ENCODE measurements at regions of chr5 and their contacts with region 1.

Region 1: GRCh38 chr5:81425569-81425968 is 31.6 kb upstream of the ACOT12 start:
- DNase-seq: no peak
- H3K4me3 ChIP-seq: peak overlapping the region in 1 of 59 donors; percentile 14
- H3K27ac ChIP-seq: peak overlapping the region in 41 of 59 donors; percentile 0 to 67 (median 39)
- H3K27me3 ChIP-seq: no peaks in the 10 kb centered on the region
- CTCF ChIP-seq: peak; percentile 64 to 93 (median 79)

Region 2: GRCh38 chr5:81506900-81507588 is 81.5 kb after region 1 on chr5:
- intact Hi-C with region 1: loop called in 1 of 2 experiments (anchors 5 kb)
- DNase-seq: peak in 7 of 10 donors; percentile 25 to 76 (median 50)
- H3K4me3 ChIP-seq: peak overlapping the region in 8 of 59 donors; percentile 1 to 54 (median 7)
- H3K27ac ChIP-seq: peak overlapping the region in 45 of 59 donors; percentile 0 to 80 (median 41)
- H3K27me3 ChIP-seq: no peaks in the 10 kb centered on the region
- CTCF ChIP-seq: peak; percentile 62 to 98 (median 89)

Region 3: DNA sequence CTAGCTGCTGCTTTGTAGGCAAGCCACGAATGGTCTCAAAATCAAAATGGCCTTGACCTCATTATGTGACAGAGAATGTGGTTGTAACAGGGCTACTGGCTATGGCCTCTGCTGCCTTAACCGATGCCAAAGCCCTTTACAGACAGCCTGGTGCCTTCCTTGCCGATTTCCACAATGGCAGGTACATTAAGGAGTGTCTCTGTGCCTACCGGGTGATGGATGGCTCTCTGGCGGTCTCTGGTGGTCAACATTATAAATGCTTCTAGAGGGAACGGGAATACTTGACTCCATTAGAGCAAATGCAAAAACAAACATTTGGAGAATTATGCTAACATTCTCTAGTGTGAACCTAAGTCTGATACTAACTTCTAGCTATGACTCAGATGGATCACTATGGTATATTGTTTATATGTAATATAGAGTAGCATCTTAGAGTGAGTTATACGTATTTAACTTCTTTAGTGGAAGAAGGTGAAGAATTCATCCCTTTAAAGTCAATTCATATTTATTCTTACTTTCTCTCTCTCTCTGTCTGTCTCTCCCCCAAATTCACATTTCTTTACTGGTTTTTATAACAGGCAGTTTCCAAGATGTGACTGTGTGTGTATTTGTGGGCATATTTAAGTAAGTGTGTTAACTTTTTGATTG is 800.1 kb after region 1 on chr5:
- intact Hi-C with region 1: loop called in 1 of 2 experiments (anchors 5 kb)
- DNase-seq: peak in 9 of 10 donors; percentile 28 to 72 (median 50)
- H3K4me3 ChIP-seq: peak overlapping the region in 19 of 59 donors; percentile 0 to 40 (median 28)
- H3K27ac ChIP-seq: no peak overlapping the region
- H3K27me3 ChIP-seq: no peaks in the 10 kb centered on the region
- CTCF ChIP-seq: peak; percentile 61 to 90 (median 82)